ENCODE measurements at regions of chr10 and their contacts with region 1.

Region 1: GRCh38 chr10:6570893-6571292 is 9.2 kb downstream of the PRKCQ start:
- DNase-seq: no peak
- H3K4me3 ChIP-seq: no peak overlapping the region
- H3K27ac ChIP-seq: no peak overlapping the region
- H3K4me1 ChIP-seq: no peaks in the 10 kb centered on the region
- H3K27me3 ChIP-seq: no peaks in the 10 kb centered on the region
- CTCF ChIP-seq: no peak
- POLR2A ChIP-seq: no peak

Region 2: GRCh38 chr10:7243873-7244272 is 673.0 kb after region 1 on chr10:
- intact Hi-C with region 1: loop called (anchors 5 kb)
- DNase-seq: no peak
- H3K4me3 ChIP-seq: no peak overlapping the region
- H3K27ac ChIP-seq: no peak overlapping the region
- H3K4me1 ChIP-seq: no peaks in the 10 kb centered on the region
- H3K27me3 ChIP-seq: no peaks in the 10 kb centered on the region
- CTCF ChIP-seq: no peak
- POLR2A ChIP-seq: no peak